Left cardiac atrium (tissue), 4 donors: ENCODE measurements at regions of chr17 and their contacts with region 1.

Region 1: DNA sequence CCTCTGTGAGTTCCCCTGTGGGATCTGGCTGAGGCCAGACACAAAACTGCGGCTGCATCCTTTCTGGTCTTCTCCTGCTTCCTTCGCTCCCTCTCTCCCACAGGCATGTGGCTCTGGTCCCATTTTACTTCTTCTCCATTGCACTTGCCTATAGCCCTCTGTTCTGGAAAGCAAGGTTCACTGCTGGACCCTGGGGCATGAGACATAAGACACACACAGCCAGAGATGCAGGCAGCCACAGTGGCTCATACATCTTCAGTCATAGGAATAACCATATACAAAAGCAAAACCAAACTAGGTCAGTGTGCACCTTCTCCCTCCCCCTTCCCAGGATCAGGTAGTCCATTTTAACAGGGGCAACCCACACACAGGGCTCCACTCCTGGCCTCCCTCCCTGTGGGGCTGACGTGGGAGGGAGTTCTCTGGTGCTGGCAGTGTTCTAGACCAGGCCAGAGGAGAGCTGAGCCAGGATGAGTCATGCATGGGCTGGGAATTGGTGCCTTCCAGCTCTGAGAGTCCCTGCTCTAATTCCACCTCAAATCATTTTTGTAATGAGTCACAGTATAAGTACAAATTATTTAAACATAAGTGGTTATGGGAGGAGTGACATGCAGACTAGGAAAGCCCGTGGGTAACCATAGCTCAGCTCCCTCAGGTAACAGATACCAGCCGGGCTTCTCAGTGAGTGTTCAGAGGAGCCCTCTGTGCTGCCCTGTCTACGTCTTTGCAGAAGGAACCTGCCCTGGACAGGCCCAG is 58.0 kb downstream of the ASIC2 start:
- DNase-seq: peak; percentile 80
- ATAC-seq: peak; percentile 95 to 99

Region 2: DNA sequence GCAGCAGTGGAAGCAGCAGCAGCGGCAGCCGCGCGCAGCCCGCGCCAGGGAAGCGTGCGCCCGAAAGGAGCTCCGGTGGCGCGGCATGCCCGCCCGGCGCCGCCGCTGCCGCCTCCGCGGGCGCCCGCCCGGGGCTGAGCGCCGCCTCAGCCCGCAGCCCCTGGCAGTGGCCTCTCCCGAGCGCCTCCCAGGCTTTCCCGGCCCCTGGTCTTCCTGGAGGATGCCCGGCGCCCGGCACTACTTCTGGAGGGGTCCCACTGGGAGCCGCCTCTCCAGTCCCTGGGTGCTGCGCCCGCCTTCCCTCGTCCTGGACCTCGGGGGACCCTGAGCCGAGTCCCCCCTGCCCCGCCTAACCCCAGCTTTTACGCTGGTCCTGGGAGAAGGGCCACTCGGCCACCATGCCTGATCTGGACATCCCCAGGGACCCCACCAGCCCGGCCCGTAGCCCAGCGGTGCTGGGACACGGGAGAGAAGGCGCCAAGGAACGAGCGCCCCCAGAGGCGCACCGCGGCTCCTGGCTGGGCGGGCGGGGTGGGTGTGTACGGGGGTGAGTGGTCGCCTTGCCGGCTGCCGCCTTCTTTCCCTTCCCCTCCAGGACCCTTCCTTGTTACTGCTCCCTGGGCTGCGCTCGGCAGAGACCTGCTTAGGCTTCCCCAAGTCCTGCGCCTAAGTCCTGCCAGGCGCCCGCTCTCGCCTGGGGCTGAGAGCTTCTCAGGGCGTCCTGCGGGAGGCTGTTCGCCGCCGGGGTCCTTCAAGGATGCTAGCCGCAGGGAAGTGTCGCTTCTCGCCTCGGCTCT is 57.3 kb after region 1 on chr17:
- intact Hi-C with region 1: loop called in 1 of 2 experiments (anchors 10 kb)
- DNase-seq: no peak
- ATAC-seq: peak; percentile 55 to 63

Region 3: GRCh38 chr17:33318241-33318640 is 83.1 kb after region 1 on chr17:
- intact Hi-C with region 1: no loop called
- DNase-seq: no peak
- ATAC-seq: no peak